Heart left ventricle (tissue), 16 donors: ENCODE measurements at regions of chr3 and their contacts with region 1.

Region 1: DNA sequence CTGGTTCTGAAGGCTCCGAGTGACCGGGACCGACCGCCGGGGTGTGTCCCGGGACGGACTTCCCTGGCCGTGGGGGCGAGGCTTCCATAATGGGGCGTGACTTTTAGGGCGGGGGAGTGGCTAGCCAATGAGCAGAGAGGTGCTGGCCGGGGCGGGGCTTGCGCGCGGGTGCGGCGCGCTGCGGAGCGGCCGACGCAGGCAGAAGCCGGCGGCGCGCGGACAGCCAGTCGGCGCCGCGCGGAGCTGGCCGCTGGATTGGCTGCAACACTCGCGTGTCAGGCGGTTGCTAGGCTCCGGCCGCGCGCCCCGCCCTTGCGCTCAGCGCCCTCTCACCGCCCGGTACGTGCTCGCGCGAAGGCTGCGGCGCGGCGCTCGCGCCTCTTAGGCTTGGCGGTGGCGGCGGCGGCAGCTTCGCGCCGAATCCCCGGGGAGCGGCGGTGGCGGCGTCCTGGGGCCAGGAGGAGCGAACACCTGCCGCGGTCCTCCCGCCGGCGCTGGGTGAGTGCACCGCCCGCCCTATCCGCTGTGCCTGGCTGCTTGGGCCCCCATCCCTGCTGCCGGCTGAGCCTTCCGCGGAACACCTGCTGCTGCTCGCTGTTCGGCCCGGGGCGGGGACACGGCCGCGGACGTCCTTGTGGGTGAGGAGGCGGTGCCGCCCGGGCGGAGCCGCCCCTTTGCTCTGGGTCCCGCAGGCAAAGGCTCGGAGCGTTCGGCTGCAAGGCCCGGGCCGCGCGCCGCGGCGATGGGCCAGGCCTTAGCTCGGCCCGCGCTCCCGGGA is at the start of gene DAG1:
- DNase-seq: peak; percentile 99
- ATAC-seq: peak; percentile 87 to 95 (median 91)
- H3K4me3 ChIP-seq: peak within 1 kb of the TSS; percentile 68 to 94 (median 84)
- H3K27ac ChIP-seq: peak within 1 kb of the TSS; percentile 91 to 100 (median 98)
- H3K4me1 ChIP-seq: peaks cover 12 to 55% (median 40%) of the 10 kb centered on the region in 12 donors
- H3K27me3 ChIP-seq: no peaks in the 10 kb centered on the region
- CTCF ChIP-seq: no peak
- POLR2A ChIP-seq: peak; percentile 56 to 88
- total RNA-seq, gene DAG1: 122 to 218 (median 141) TPM

Region 2: GRCh38 chr3:49411968-49412631 is 58.0 kb before region 1 on chr3 and contains the starts of genes RHOA and TCTA:
- intact Hi-C with region 1: loop called in 1 of 10 experiments (anchors 10 kb)
- DNase-seq: peak; percentile 99 to 100 (median 100)
- ATAC-seq: peak; percentile 95 to 97 (median 96)
- H3K4me3 ChIP-seq: peak within 1 kb of the TSS; percentile 67 to 99 (median 86)
- H3K27ac ChIP-seq: peak within 1 kb of the TSS; percentile 91 to 99 (median 98)
- H3K4me1 ChIP-seq: peaks cover 7 to 79% (median 50%) of the 10 kb centered on the region in 12 donors
- H3K27me3 ChIP-seq: no peaks in the 10 kb centered on the region
- CTCF ChIP-seq: no peak
- POLR2A ChIP-seq: peak; percentile 90 to 96
- total RNA-seq, gene RHOA: 224 to 479 (median 291) TPM
- total RNA-seq, gene TCTA: 13.2 to 25.3 (median 16.7) TPM

Region 3: DNA sequence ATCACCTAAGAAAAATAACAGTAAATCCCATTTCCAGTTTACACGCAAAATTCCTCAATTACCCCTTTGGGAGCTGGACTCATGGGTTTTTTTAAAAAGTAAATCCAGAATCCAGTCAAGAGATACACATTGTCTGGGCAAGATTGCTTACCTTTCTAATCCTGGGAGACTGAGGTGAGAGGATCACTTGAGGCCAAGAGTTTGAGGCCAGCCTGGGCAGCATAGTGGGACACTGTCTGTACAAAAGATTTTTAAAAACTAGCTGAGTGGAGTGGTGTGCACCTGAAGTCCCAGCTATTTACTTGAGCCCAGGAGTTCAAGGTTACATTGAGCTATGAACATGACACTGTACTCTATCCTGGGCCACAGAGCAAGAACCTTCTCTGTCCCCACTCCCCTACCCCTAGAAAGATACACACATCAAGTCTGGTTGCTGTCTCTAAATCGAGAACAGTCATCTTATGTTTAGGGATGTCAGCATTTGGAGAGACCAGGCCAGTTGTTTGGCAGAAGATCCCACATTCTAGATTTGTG is 39.0 kb after region 1 on chr3:
- intact Hi-C with region 1: loop called in 1 of 10 experiments (anchors 5 kb)
- DNase-seq: no peak
- ATAC-seq: no peak
- H3K4me3 ChIP-seq: no peak overlapping the region
- H3K27ac ChIP-seq: no peak overlapping the region
- H3K4me1 ChIP-seq: peaks cover 0 to 10% (median 0%) of the 10 kb centered on the region in 12 donors
- H3K27me3 ChIP-seq: no peaks in the 10 kb centered on the region
- CTCF ChIP-seq: no peak
- POLR2A ChIP-seq: no peak

Region 4: GRCh38 chr3:49519916-49520385 is 49.8 kb after region 1 on chr3:
- intact Hi-C with region 1: loop called in 1 of 10 experiments (anchors 10 kb)
- DNase-seq: no peak
- ATAC-seq: no peak
- H3K4me3 ChIP-seq: no peak overlapping the region
- H3K27ac ChIP-seq: peak overlapping the region in 1 of 12 donors; percentile 14
- H3K4me1 ChIP-seq: peaks cover 3 to 59% (median 17%) of the 10 kb centered on the region in 12 donors
- H3K27me3 ChIP-seq: no peaks in the 10 kb centered on the region
- CTCF ChIP-seq: no peak
- POLR2A ChIP-seq: no peak

Region 5: GRCh38 chr3:49539659-49540560 is 69.8 kb after region 1 on chr3:
- intact Hi-C with region 1: loop called in 1 of 10 experiments (anchors 5 kb)
- DNase-seq: peak; percentile 93 to 98 (median 95)
- ATAC-seq: peak; percentile 92 to 98 (median 98)
- H3K4me3 ChIP-seq: peak overlapping the region; percentile 12 to 89 (median 57)
- H3K27ac ChIP-seq: peak overlapping the region; percentile 12 to 88 (median 76)
- H3K4me1 ChIP-seq: peaks cover 0 to 25% (median 7%) of the 10 kb centered on the region in 12 donors
- H3K27me3 ChIP-seq: no peaks in the 10 kb centered on the region
- CTCF ChIP-seq: peak; percentile 87 to 99 (median 91)
- POLR2A ChIP-seq: peak in 1 of 2 donors; percentile 65

Region 6: GRCh38 chr3:49673715-49674496 is 203.8 kb after region 1 on chr3 and contains the start of gene APEH:
- intact Hi-C with region 1: loop called in 1 of 10 experiments (anchors 5 kb)
- DNase-seq: peak; percentile 95 to 99 (median 97)
- ATAC-seq: peak; percentile 91 to 95 (median 94)
- H3K4me3 ChIP-seq: peak within 1 kb of the TSS; percentile 66 to 100 (median 80)
- H3K27ac ChIP-seq: peak within 1 kb of the TSS; percentile 63 to 99 (median 90)
- H3K4me1 ChIP-seq: peaks cover 0 to 28% (median 14%) of the 10 kb centered on the region in 12 donors
- H3K27me3 ChIP-seq: no peaks in the 10 kb centered on the region
- CTCF ChIP-seq: peak in 2 of 12 donors; percentile 17 to 19
- POLR2A ChIP-seq: peak in 1 of 2 donors; percentile 78
- total RNA-seq, gene APEH: 74.6 to 136 (median 105) TPM